ENCODE measurements at regions of chr15 and their contacts with region 1.

Region 1: GRCh38 chr15:42137431-42138261 is 18.8 kb downstream of the PLA2G4F start:
- DNase-seq: peak; percentile 35
- ATAC-seq: no peak
- H3K4me3 Mint-ChIP-seq: no peak overlapping the region
- H3K27ac Mint-ChIP-seq: no peak overlapping the region
- H3K4me1 Mint-ChIP-seq: no peaks in the 10 kb centered on the region
- H3K27me3 Mint-ChIP-seq: no peaks in the 10 kb centered on the region

Region 2: DNA sequence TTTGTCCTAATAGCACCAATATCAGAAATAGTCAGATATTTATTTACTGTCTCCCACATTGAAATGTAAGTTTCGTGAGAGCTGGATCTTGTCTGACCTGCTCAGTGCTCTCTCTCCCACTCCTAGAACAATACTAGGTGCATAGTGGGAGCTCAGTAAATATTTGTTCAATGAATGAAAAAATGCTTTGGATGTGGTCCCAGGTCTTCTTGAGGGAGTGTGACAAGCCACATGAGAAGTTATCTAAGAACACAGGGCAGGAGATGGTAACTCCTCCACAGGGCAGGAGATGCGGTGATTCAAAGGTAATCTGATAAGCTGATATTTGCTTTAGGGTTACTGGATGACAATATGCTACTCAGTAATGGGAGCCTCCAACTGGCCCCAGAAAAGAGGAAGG is 91.1 kb before region 1 on chr15:
- CTCF ChIA-PET with region 1: no interaction called
- POLR2A ChIA-PET with region 1: no interaction called
- intact Hi-C with region 1: no loop called
- DNase-seq: no peak
- ATAC-seq: no peak
- H3K4me3 Mint-ChIP-seq: no peak overlapping the region
- H3K27ac Mint-ChIP-seq: no peak overlapping the region
- H3K4me1 Mint-ChIP-seq: no peaks in the 10 kb centered on the region
- H3K27me3 Mint-ChIP-seq: peaks cover under 1% of the 10 kb centered on the region

Region 3: GRCh38 chr15:42065033-42065432 is 72.6 kb before region 1 on chr15:
- CTCF ChIA-PET with region 1: interaction called, 10 read pairs
- POLR2A ChIA-PET with region 1: no interaction called
- intact Hi-C with region 1: loop called (anchors 1 to 2 kb)
- DNase-seq: no peak
- ATAC-seq: no peak
- H3K4me3 Mint-ChIP-seq: no peak overlapping the region
- H3K27ac Mint-ChIP-seq: no peak overlapping the region
- H3K4me1 Mint-ChIP-seq: no peaks in the 10 kb centered on the region
- H3K27me3 Mint-ChIP-seq: peaks cover 9% of the 10 kb centered on the region

Region 4: GRCh38 chr15:42184296-42184695 is 46.6 kb after region 1 on chr15:
- CTCF ChIA-PET with region 1: no interaction called
- POLR2A ChIA-PET with region 1: no interaction called
- intact Hi-C with region 1: no loop called
- DNase-seq: no peak
- ATAC-seq: no peak
- H3K4me3 Mint-ChIP-seq: no peak overlapping the region
- H3K27ac Mint-ChIP-seq: no peak overlapping the region
- H3K4me1 Mint-ChIP-seq: peaks cover 15% of the 10 kb centered on the region
- H3K27me3 Mint-ChIP-seq: no peaks in the 10 kb centered on the region